ENCODE measurements at regions of chr3 and their contacts with region 1.

Region 1: DNA sequence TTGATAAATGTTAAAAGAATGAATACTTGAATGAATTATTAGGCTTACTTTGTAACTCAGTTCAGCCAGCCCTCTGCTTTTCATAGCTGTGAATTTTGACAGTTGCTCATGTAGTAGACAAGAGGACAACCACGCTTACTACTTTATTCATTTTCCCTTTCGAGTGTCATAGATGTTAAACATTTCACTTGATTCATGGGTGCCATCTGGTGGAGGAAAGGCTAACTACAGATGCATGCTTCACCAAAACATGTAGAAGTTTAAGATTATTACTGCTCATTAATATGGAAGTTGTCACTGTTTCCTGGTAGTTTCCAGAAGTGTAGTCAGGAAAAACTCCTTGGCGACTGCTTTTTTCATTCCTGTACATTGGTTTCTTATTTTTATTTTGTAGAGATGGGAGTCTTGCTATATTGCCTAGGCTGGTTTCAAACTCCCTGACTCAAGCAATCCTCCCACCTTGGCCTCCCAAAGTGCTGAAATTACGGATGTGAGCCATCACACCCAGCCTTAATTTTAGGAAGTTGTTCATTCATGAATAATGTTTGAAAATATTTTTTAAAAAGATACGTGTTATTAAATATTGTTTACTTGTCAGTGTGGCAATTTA is 163.2 kb downstream of the B3GALNT1 start:
- DNase-seq: peak; percentile 46 to 71 (median 52)
- H3K4me3 ChIP-seq: no peak overlapping the region
- H3K4me3 Mint-ChIP-seq: no peak overlapping the region
- H3K27ac ChIP-seq: no peak overlapping the region
- H3K27ac Mint-ChIP-seq: no peak overlapping the region
- H3K4me1 ChIP-seq: no peaks in the 10 kb centered on the region
- H3K4me1 Mint-ChIP-seq: peaks cover 2 to 5% (median 4%) of the 10 kb centered on the region in 3 donors
- H3K27me3 ChIP-seq: no peaks in the 10 kb centered on the region
- H3K27me3 Mint-ChIP-seq: peaks cover 0 to 3% of the 10 kb centered on the region in 2 donors

Region 2: DNA sequence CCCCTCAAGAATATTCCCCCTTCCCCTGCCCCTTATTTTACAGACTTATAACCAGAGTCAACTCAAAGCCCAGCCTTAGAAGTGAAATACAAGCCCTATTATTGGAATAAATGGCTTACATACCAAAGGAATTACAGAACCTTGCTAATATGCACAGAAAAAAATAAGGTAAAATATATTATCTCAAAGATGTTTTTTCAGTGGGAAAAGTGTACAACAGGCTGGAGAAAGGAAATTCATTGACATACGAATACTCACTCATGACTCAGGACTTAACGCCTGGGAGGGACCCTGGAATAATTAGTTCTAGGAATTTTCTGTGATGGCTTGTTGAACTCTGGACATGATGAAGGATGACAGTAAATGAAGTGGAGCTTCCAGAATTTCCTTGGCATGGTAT is 238.0 kb before region 1 on chr3:
- CTCF ChIA-PET with region 1: interaction called, 18 read pairs
- POLR2A ChIA-PET with region 1: no interaction called
- DNase-seq: no peak
- H3K4me3 ChIP-seq: no peak overlapping the region
- H3K4me3 Mint-ChIP-seq: no peak overlapping the region
- H3K27ac ChIP-seq: no peak overlapping the region
- H3K27ac Mint-ChIP-seq: no peak overlapping the region
- H3K4me1 ChIP-seq: no peaks in the 10 kb centered on the region
- H3K4me1 Mint-ChIP-seq: no peaks in the 10 kb centered on the region
- H3K27me3 ChIP-seq: no peaks in the 10 kb centered on the region
- H3K27me3 Mint-ChIP-seq: peaks cover 12 to 72% of the 10 kb centered on the region in 2 donors

Region 3: DNA sequence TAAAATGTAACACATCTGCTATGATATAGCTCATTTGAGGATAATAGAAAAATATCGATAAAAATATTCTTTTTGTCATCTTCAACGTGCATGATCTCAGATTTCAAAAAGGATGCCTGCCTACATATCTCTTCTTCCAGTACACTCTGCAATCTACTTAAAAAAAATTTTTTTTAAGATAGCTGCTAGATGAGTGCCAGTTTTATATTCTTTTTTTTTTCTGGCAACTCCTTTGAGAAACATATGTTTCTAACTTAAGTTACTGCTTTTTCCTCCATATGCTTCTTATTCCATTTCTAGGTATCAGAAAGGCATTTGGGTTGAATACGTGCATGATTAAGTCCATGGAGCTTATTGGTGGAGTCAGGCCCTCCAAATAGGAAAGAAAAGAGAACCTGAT is 25.5 kb before region 1 on chr3:
- CTCF ChIA-PET with region 1: no interaction called
- POLR2A ChIA-PET with region 1: no interaction called
- DNase-seq: no peak
- H3K4me3 ChIP-seq: no peak overlapping the region
- H3K4me3 Mint-ChIP-seq: no peak overlapping the region
- H3K27ac ChIP-seq: no peak overlapping the region
- H3K27ac Mint-ChIP-seq: no peak overlapping the region
- H3K4me1 ChIP-seq: no peaks in the 10 kb centered on the region
- H3K4me1 Mint-ChIP-seq: no peaks in the 10 kb centered on the region
- H3K27me3 ChIP-seq: no peaks in the 10 kb centered on the region
- H3K27me3 Mint-ChIP-seq: peaks cover 3% of the 10 kb centered on the region in 2 donors

Region 4: DNA sequence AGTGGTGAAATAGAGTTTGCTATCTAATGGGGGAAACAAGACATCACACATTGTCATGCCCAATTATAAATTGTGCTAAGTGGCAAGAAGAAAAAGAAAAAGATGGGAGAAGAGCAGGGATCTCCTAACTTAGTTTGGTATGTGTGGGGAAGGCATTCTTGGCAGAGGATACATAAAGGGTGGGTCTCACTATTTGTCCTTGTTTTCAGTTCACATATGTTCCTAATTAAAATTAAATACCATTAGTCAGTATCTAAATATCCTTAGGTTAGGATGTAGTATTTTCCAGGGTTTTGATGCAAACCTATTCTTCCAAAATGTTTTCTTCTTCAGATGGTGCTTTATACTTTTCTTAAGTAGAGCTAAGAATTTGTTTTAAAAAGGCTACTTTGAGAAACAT is 10.5 kb before region 1 on chr3:
- CTCF ChIA-PET with region 1: interaction called, 11 read pairs
- POLR2A ChIA-PET with region 1: no interaction called
- DNase-seq: no peak
- H3K4me3 ChIP-seq: no peak overlapping the region
- H3K4me3 Mint-ChIP-seq: no peak overlapping the region
- H3K27ac ChIP-seq: no peak overlapping the region
- H3K27ac Mint-ChIP-seq: no peak overlapping the region
- H3K4me1 ChIP-seq: no peaks in the 10 kb centered on the region
- H3K4me1 Mint-ChIP-seq: no peaks in the 10 kb centered on the region
- H3K27me3 ChIP-seq: no peaks in the 10 kb centered on the region
- H3K27me3 Mint-ChIP-seq: peaks cover 0 to 1% of the 10 kb centered on the region in 2 donors

Region 5: DNA sequence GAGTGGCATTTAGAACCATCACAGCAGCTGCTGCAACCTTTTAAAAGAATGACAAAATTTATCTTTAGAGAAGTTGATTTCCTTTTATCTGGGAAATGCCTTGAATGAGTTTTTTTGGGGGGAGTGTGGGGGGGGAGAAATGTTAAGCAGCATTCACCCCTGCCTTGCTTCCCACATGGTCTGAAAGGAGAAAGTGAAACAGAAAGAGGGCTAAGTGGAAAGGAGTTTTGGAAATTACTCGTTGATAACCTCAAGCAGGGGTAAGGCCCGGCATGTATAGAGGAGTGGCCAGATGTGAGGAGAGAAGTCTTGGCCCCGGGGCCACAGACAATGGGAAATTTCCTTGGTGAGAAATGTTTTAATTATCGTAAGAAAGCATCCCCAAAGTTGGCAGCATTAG is 139.6 kb after region 1 on chr3:
- CTCF ChIA-PET with region 1: no interaction called
- POLR2A ChIA-PET with region 1: no interaction called
- DNase-seq: no peak
- H3K4me3 ChIP-seq: no peak overlapping the region
- H3K4me3 Mint-ChIP-seq: no peak overlapping the region
- H3K27ac ChIP-seq: no peak overlapping the region
- H3K27ac Mint-ChIP-seq: no peak overlapping the region
- H3K4me1 ChIP-seq: no peaks in the 10 kb centered on the region
- H3K4me1 Mint-ChIP-seq: peaks cover 0 to 7% (median 6%) of the 10 kb centered on the region in 3 donors
- H3K27me3 ChIP-seq: no peaks in the 10 kb centered on the region
- H3K27me3 Mint-ChIP-seq: peaks cover 0 to 10% of the 10 kb centered on the region in 2 donors

Measured in CD8-positive, alpha-beta memory T cell (primary cell).